CD8-positive, alpha-beta memory T cell (primary cell): ENCODE measurements at regions of chr20 and their contacts with region 1.

Region 1: GRCh38 chr20:33666293-33667244 is at the start of gene ACTL10:
- DNase-seq: peak; percentile 52 to 88 (median 72)
- H3K4me3 ChIP-seq: peak within 1 kb of the TSS; percentile 77
- H3K4me3 Mint-ChIP-seq: peak within 1 kb of the TSS; percentile 88 to 96 (median 94)
- H3K27ac ChIP-seq: peak within 1 kb of the TSS; percentile 43
- H3K27ac Mint-ChIP-seq: peak within 1 kb of the TSS; percentile 90 to 97 (median 94)
- H3K4me1 ChIP-seq: peaks cover 33% of the 10 kb centered on the region
- H3K4me1 Mint-ChIP-seq: peaks cover 34 to 54% (median 37%) of the 10 kb centered on the region in 3 donors
- H3K27me3 ChIP-seq: no peaks in the 10 kb centered on the region
- H3K27me3 Mint-ChIP-seq: no peaks in the 10 kb centered on the region
- total RNA-seq, gene ACTL10: 3.8 to 4.6 TPM

Region 2: GRCh38 chr20:33443512-33444239 is 222.9 kb before region 1 on chr20 and contains the start of gene SNTA1:
- CTCF ChIA-PET with region 1: interaction called, 13 read pairs
- POLR2A ChIA-PET with region 1: interaction called, 9 read pairs
- DNase-seq: peak; percentile 70 to 92 (median 83)
- H3K4me3 ChIP-seq: peak within 1 kb of the TSS; percentile 87
- H3K4me3 Mint-ChIP-seq: peak within 1 kb of the TSS; percentile 89 to 96 (median 93)
- H3K27ac ChIP-seq: peak within 1 kb of the TSS; percentile 65
- H3K27ac Mint-ChIP-seq: peak within 1 kb of the TSS; percentile 88 to 98 (median 94)
- H3K4me1 ChIP-seq: peaks cover 19% of the 10 kb centered on the region
- H3K4me1 Mint-ChIP-seq: peaks cover 17 to 26% (median 19%) of the 10 kb centered on the region in 3 donors
- H3K27me3 ChIP-seq: no peaks in the 10 kb centered on the region
- H3K27me3 Mint-ChIP-seq: peaks cover 0 to 1% of the 10 kb centered on the region in 2 donors
- total RNA-seq, gene SNTA1: 4.6 to 5.6 TPM

Region 3: DNA sequence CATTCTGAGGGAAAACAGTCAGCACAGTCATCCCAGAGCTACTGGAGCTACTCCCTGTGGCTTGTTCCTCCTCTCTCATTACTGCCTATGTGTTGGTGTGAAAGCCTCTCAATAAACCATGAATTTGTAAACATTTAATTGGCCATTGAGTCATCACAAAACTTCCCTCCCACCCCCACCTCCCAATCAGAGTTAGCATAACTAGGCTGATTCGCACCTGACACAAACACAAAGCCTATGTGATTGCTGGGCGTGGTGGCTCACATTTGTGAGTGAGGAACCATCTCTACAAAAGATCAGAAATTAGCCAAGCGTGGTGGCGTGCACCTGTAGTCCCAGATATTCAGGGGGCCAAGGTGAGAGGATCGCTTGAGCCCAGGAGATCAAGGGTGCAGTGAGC is 205.9 kb before region 1 on chr20:
- CTCF ChIA-PET with region 1: interaction called, 52 read pairs
- POLR2A ChIA-PET with region 1: interaction called, 3 read pairs
- DNase-seq: no peak
- H3K4me3 ChIP-seq: no peak overlapping the region
- H3K4me3 Mint-ChIP-seq: no peak overlapping the region
- H3K27ac ChIP-seq: no peak overlapping the region
- H3K27ac Mint-ChIP-seq: no peak overlapping the region
- H3K4me1 ChIP-seq: no peaks in the 10 kb centered on the region
- H3K4me1 Mint-ChIP-seq: no peaks in the 10 kb centered on the region
- H3K27me3 ChIP-seq: no peaks in the 10 kb centered on the region
- H3K27me3 Mint-ChIP-seq: no peaks in the 10 kb centered on the region

Region 4: GRCh38 chr20:33653218-33653899 is 13.2 kb before region 1 on chr20:
- CTCF ChIA-PET with region 1: interaction called, 87 read pairs
- POLR2A ChIA-PET with region 1: interaction called, 4 read pairs
- DNase-seq: peak in 4 of 5 donors; percentile 20 to 70 (median 34)
- H3K4me3 ChIP-seq: no peak overlapping the region
- H3K4me3 Mint-ChIP-seq: no peak overlapping the region
- H3K27ac ChIP-seq: no peak overlapping the region
- H3K27ac Mint-ChIP-seq: peak overlapping the region in 2 of 8 donors; percentile 72 to 91
- H3K4me1 ChIP-seq: no peaks in the 10 kb centered on the region
- H3K4me1 Mint-ChIP-seq: peaks cover 10 to 25% (median 12%) of the 10 kb centered on the region in 3 donors
- H3K27me3 ChIP-seq: no peaks in the 10 kb centered on the region
- H3K27me3 Mint-ChIP-seq: peaks cover 0 to 1% of the 10 kb centered on the region in 2 donors

Region 5: DNA sequence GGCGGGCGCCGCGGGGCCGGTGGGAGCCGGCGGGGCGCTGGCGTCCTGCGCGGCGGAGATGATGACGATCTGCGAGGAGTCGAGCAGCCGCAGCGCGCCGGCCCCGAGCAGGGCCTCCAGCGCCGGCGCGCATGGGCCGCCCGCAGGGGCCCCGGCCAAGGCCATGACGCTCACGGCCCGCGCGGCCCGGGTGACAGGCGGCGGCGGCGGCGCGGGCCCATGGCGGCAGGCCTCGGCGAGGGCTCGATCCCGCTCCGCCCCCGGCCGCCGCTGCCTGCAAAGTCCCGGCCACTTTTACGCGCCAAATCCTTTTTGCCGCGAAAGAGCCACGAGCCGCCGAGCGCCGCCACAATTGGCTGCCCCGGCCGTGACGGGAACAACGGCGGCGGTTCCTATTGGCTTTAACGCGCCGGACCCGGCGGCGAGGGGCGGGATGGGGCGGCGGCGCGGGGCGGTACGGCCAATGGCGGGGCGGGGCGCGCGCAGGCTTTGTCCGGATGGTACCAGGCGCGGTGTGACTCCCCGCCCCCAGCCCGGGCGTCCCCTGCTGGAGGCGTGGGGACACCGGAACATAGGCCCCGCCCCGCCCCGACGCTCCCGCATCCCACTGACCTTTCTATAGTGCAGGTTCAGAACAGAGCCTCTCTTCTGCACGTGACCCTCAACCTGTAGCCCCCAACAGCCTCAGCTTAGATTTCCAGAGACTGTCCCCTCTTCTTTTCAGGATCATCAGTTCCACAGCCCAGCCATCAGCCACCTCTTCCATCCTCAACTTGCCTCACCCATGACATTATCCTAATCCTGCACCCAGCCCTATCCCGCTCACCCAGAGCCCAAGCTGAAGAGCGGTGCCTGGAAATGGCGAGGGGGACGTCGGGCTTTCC is 19.8 kb after region 1 on chr20 and contains the start of gene E2F1:
- CTCF ChIA-PET with region 1: interaction called, 103 read pairs
- POLR2A ChIA-PET with region 1: interaction called, 6 read pairs
- DNase-seq: peak; percentile 91 to 95 (median 93)
- H3K4me3 ChIP-seq: peak within 1 kb of the TSS; percentile 58
- H3K4me3 Mint-ChIP-seq: peak within 1 kb of the TSS; percentile 77 to 92 (median 84)
- H3K27ac ChIP-seq: peak within 1 kb of the TSS; percentile 43
- H3K27ac Mint-ChIP-seq: peak within 1 kb of the TSS; percentile 40 to 98 (median 90)
- H3K4me1 ChIP-seq: peaks cover 37% of the 10 kb centered on the region
- H3K4me1 Mint-ChIP-seq: peaks cover 36 to 48% (median 46%) of the 10 kb centered on the region in 3 donors
- H3K27me3 ChIP-seq: no peaks in the 10 kb centered on the region
- H3K27me3 Mint-ChIP-seq: no peaks in the 10 kb centered on the region
- total RNA-seq, gene E2F1: 68.8 to 72.3 TPM